MCF 10A (cell line): ENCODE measurements at regions of chrX and their contacts with region 1.

Region 1: DNA sequence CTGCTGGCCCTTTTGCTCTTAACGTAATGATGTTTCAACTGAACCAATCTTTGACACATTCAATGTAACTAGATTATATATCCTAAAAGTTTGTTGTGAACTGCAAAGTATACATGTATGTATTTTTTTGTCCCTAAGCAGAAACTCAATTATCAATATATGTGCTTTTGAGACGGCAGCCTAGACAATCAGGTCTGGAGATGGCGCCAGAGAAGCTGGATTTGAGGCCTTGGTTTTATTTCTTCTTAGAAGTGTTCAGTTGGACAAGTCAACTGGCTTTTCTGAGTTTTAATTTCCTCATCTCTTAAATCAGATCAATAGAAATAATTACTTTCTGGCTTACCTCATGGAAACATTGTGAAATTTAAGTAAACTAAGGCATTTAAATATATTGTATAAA is 62.5 kb downstream of the DCAF8L1 start:
- DNase-seq: peak; percentile 41
- H3K4me3 Mint-ChIP-seq: no peak overlapping the region
- H3K27ac Mint-ChIP-seq: no peak overlapping the region
- H3K4me1 Mint-ChIP-seq: no peaks in the 10 kb centered on the region
- H3K27me3 Mint-ChIP-seq: no peaks in the 10 kb centered on the region
- CTCF ChIP-seq: peak; percentile 22

Region 2: GRCh38 chrX:27751976-27752375 is 166.8 kb before region 1 on chrX:
- CTCF ChIA-PET with region 1: no interaction called
- POLR2A ChIA-PET with region 1: no interaction called
- intact Hi-C with region 1: no loop called
- DNase-seq: peak; percentile 1
- H3K4me3 Mint-ChIP-seq: no peak overlapping the region
- H3K27ac Mint-ChIP-seq: no peak overlapping the region
- H3K4me1 Mint-ChIP-seq: peaks cover 5% of the 10 kb centered on the region
- H3K27me3 Mint-ChIP-seq: no peaks in the 10 kb centered on the region
- CTCF ChIP-seq: no peak

Region 3: GRCh38 chrX:28177202-28177601 is 258.4 kb after region 1 on chrX:
- CTCF ChIA-PET with region 1: no interaction called
- POLR2A ChIA-PET with region 1: no interaction called
- intact Hi-C with region 1: no loop called
- DNase-seq: peak; percentile 9
- H3K4me3 Mint-ChIP-seq: no peak overlapping the region
- H3K27ac Mint-ChIP-seq: no peak overlapping the region
- H3K4me1 Mint-ChIP-seq: no peaks in the 10 kb centered on the region
- H3K27me3 Mint-ChIP-seq: no peaks in the 10 kb centered on the region
- CTCF ChIP-seq: peak; percentile 23

Region 4: GRCh38 chrX:28802625-28803024 is 883.8 kb after region 1 on chrX:
- CTCF ChIA-PET with region 1: no interaction called
- POLR2A ChIA-PET with region 1: no interaction called
- intact Hi-C with region 1: loop called (anchors 5 kb)
- DNase-seq: peak; percentile 5
- H3K4me3 Mint-ChIP-seq: no peak overlapping the region
- H3K27ac Mint-ChIP-seq: no peak overlapping the region
- H3K4me1 Mint-ChIP-seq: no peaks in the 10 kb centered on the region
- H3K27me3 Mint-ChIP-seq: no peaks in the 10 kb centered on the region
- CTCF ChIP-seq: peak; percentile 21

Region 5: DNA sequence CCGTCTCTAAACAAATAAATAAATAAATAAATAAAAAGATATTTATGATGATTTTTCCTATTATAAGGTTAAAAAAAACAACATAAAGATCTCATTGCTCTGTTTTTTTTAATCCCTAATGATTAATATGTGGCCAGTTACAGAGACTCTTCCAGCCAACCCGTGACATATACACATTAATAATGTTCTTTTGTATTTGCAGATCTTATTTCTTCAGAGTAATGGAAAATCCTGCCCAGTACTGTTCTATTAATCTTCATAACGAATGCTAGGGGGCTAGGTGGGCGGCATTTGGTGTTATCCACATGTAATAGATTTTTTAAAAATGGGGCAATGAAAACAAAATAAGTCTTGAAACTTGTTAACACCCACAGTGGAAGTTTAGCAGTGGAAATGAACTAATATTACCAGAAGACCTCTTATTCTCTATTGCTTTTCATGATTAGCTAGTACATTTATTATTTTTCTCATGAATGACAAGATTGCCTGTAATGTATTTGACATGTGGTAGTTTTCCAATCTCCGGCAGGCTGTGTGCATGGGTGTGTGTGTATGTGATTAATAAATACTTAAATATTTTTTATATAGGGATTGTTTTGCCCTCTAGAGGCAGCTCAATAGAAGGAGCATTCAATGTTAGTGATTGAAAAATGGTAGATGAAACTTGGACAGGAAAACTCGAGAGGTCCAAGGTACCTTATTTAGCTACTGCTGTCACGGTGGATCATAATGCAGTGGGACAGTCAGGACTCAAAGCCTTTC is 1125.8 kb after region 1 on chrX:
- CTCF ChIA-PET with region 1: no interaction called
- POLR2A ChIA-PET with region 1: no interaction called
- intact Hi-C with region 1: loop called (anchors 2 kb)
- DNase-seq: peak; percentile 23
- H3K4me3 Mint-ChIP-seq: no peak overlapping the region
- H3K27ac Mint-ChIP-seq: no peak overlapping the region
- H3K4me1 Mint-ChIP-seq: no peaks in the 10 kb centered on the region
- H3K27me3 Mint-ChIP-seq: no peaks in the 10 kb centered on the region
- CTCF ChIP-seq: peak; percentile 19

Region 6: GRCh38 chrX:29090811-29091210 is 1172.0 kb after region 1 on chrX:
- CTCF ChIA-PET with region 1: no interaction called
- POLR2A ChIA-PET with region 1: no interaction called
- intact Hi-C with region 1: loop called (anchors 2 kb)
- DNase-seq: peak; percentile 39
- H3K4me3 Mint-ChIP-seq: no peak overlapping the region
- H3K27ac Mint-ChIP-seq: no peak overlapping the region
- H3K4me1 Mint-ChIP-seq: no peaks in the 10 kb centered on the region
- H3K27me3 Mint-ChIP-seq: no peaks in the 10 kb centered on the region
- CTCF ChIP-seq: peak; percentile 20